Activated naive CD4-positive, alpha-beta T cell treated with anti-CD3 and anti-CD28 coated beads for 36 hours (primary cell): ENCODE measurements at regions of chr1 and their contacts with region 1.

Region 1: GRCh38 chr1:23403735-23404486 is 20.6 kb downstream of the TCEA3 start:
- DNase-seq: peak; percentile 94
- H3K4me3 Mint-ChIP-seq: no peak overlapping the region
- H3K27ac Mint-ChIP-seq: no peak overlapping the region
- H3K4me1 Mint-ChIP-seq: peaks cover 11% of the 10 kb centered on the region
- H3K27me3 Mint-ChIP-seq: no peaks in the 10 kb centered on the region

Region 2: GRCh38 chr1:23216771-23217420 is 187.0 kb before region 1 on chr1:
- CTCF ChIA-PET with region 1: no interaction called
- intact Hi-C with region 1: loop called (anchors 2 kb)
- DNase-seq: peak; percentile 28
- H3K4me3 Mint-ChIP-seq: peak overlapping the region; percentile 14
- H3K27ac Mint-ChIP-seq: no peak overlapping the region
- H3K4me1 Mint-ChIP-seq: peaks cover 2% of the 10 kb centered on the region
- H3K27me3 Mint-ChIP-seq: peaks cover 48% of the 10 kb centered on the region